WTC11 (cell line): ENCODE measurements at regions of chr5 and their contacts with region 1.

Region 1: DNA sequence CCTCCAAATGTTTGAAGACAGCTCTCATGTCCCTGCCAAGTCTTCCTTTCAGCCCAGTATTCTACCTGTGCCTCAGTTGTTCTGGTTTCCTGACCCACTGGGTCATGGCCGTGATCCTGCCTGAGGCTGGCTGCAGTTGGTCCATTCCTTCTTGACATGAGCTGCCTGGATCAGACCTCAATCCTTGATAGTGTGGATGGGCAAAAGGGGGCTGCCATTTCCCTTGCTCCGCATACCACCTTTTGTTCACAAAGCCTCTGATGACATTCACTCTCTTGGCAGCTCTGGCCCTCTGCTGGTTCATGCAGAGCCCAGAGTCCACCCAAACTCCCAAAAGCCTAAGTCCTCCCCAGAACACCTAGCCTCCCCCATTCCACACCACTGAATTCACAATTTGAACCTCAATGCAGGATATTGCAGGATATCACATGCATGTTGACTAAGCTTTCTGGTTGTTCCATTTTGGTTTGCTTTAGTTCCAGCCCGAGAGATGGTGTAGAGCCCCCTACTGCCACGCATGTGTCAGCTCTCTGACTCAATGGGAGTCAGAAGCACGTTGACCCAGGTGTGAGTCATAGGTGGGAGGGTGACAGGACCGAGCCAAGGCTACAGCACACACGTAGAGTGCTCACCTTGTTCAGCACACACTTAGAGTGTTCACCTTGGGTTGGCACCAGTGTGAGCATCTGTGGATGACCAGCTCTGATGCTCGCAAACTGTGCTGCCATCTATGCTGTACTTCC is 137.2 kb downstream of the MTX3 start:
- DNase-seq: no peak
- ATAC-seq: 0 out of 2 replicates have a peak, but pooled peaks have one; percentile 54
- H3K4me3 Mint-ChIP-seq: no peak overlapping the region
- H3K27ac Mint-ChIP-seq: no peak overlapping the region
- H3K4me1 Mint-ChIP-seq: no peaks in the 10 kb centered on the region
- H3K27me3 Mint-ChIP-seq: no peaks in the 10 kb centered on the region
- CTCF ChIP-seq: no peak

Region 2: GRCh38 chr5:79829260-79829659 is 24.6 kb before region 1 on chr5:
- CTCF ChIA-PET with region 1: interaction called, 10 read pairs
- POLR2A ChIA-PET with region 1: no interaction called
- DNase-seq: peak; percentile 68
- ATAC-seq: peak; percentile 100
- H3K4me3 Mint-ChIP-seq: no peak overlapping the region
- H3K27ac Mint-ChIP-seq: no peak overlapping the region
- H3K4me1 Mint-ChIP-seq: no peaks in the 10 kb centered on the region
- H3K27me3 Mint-ChIP-seq: no peaks in the 10 kb centered on the region
- CTCF ChIP-seq: peak; percentile 53

Region 3: DNA sequence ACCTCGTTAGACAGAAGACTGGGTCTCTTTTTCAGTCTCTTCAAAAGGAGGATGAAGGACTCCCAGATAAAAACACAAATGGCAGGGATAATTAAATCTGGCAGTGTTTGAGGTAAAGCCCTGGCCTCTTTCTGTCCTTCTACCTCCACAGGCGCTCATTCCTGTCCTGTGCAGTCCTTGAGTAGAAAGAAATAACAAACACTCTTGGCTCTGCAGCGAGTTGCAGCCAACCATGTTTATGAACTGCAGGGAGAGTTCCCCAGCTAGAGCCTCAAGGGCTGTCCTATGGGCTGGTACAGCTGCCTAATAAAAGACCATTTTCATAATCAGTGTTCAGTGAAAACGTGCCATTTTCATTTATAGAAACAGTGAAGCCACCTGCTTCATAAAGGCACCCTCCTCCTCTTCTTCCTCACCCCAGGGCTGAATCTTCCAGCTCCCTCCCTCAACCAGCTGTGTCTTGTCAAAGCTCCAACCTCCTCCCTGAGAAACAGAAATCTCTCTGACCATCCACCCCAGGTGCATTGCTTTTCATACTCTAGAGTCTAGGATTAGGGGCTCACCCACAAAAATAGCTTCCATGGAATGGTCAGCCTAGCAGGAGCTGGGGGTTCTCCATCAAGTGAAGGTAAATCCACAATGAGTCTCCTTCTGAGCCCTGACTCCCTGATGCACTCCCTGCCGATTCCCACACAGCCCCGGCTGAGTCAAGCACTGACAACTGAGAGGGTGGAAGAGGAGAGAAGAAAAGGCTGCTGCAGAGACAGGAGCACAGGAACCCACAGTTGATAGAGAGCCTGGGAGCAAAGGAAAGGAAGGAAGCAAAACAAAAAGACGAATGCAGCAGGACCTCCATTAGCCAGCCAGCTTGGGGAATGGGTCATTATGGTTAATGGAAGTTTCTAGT is 13.5 kb before region 1 on chr5:
- CTCF ChIA-PET with region 1: interaction called, 13 read pairs
- POLR2A ChIA-PET with region 1: no interaction called
- DNase-seq: no peak
- ATAC-seq: no peak
- H3K4me3 Mint-ChIP-seq: no peak overlapping the region
- H3K27ac Mint-ChIP-seq: no peak overlapping the region
- H3K4me1 Mint-ChIP-seq: peaks cover 8% of the 10 kb centered on the region
- H3K27me3 Mint-ChIP-seq: no peaks in the 10 kb centered on the region
- CTCF ChIP-seq: no peak